Dorsolateral prefrontal cortex (tissue), 120 donors: ENCODE measurements at regions of chr7 and their contacts with region 1.

Region 1: GRCh38 chr7:113086431-113086888 is at the start of gene GPR85:
- DNase-seq: peak; percentile 30 to 79 (median 63)
- H3K4me3 ChIP-seq: peak within 1 kb of the TSS; percentile 40 to 79 (median 65)
- H3K27ac ChIP-seq: peak within 1 kb of the TSS in 58 of 59 donors; percentile 5 to 91 (median 81)
- H3K27me3 ChIP-seq: peaks cover 0 to 5% (median 0%) of the 10 kb centered on the region in 45 donors
- CTCF ChIP-seq: no peak
- total RNA-seq, gene GPR85: 10.1 to 30.1 (median 19.7) TPM

Region 2: GRCh38 chr7:113131367-113131766 is 44.9 kb after region 1 on chr7:
- intact Hi-C with region 1: no loop called
- DNase-seq: no peak
- H3K4me3 ChIP-seq: no peak overlapping the region
- H3K27ac ChIP-seq: no peak overlapping the region
- H3K27me3 ChIP-seq: no peaks in the 10 kb centered on the region
- CTCF ChIP-seq: no peak

Region 3: GRCh38 chr7:113657603-113658002 is 571.1 kb after region 1 on chr7:
- intact Hi-C with region 1: loop called in 1 of 2 experiments (anchors 5 kb)
- DNase-seq: no peak
- H3K4me3 ChIP-seq: no peak overlapping the region
- H3K27ac ChIP-seq: peak overlapping the region in 41 of 59 donors; percentile 5 to 81 (median 52)
- H3K27me3 ChIP-seq: no peaks in the 10 kb centered on the region
- CTCF ChIP-seq: no peak